ENCODE measurements at regions of chrX and their contacts with region 1.

Region 1: GRCh38 chrX:154748712-154749343 is 2.0 kb downstream of the GAB3 start:
- DNase-seq: peak; percentile 55
- ATAC-seq: peak; percentile 83
- H3K4me3 Mint-ChIP-seq: no peak overlapping the region
- H3K27ac Mint-ChIP-seq: no peak overlapping the region
- H3K4me1 Mint-ChIP-seq: peaks cover 22% of the 10 kb centered on the region
- H3K27me3 Mint-ChIP-seq: peaks cover 2% of the 10 kb centered on the region

Region 2: GRCh38 chrX:154714925-154715324 is 33.9 kb before region 1 on chrX:
- CTCF ChIA-PET with region 1: interaction called, 58 read pairs
- POLR2A ChIA-PET with region 1: interaction called, 7 read pairs
- intact Hi-C with region 1: loop called (anchors 1 to 2 kb)
- DNase-seq: peak; percentile 52
- ATAC-seq: no peak
- H3K4me3 Mint-ChIP-seq: no peak overlapping the region
- H3K27ac Mint-ChIP-seq: no peak overlapping the region
- H3K4me1 Mint-ChIP-seq: peaks cover 49% of the 10 kb centered on the region
- H3K27me3 Mint-ChIP-seq: no peaks in the 10 kb centered on the region

Region 3: GRCh38 chrX:154734061-154734781 is 14.6 kb before region 1 on chrX:
- CTCF ChIA-PET with region 1: interaction called, 22 read pairs
- POLR2A ChIA-PET with region 1: interaction called, 4 read pairs
- intact Hi-C with region 1: no loop called
- DNase-seq: peak; percentile 16
- ATAC-seq: peak; percentile 63
- H3K4me3 Mint-ChIP-seq: peak overlapping the region; percentile 56
- H3K27ac Mint-ChIP-seq: peak overlapping the region; percentile 90
- H3K4me1 Mint-ChIP-seq: peaks cover 83% of the 10 kb centered on the region
- H3K27me3 Mint-ChIP-seq: no peaks in the 10 kb centered on the region

Region 4: GRCh38 chrX:154840856-154841255 is 92.0 kb after region 1 on chrX:
- CTCF ChIA-PET with region 1: interaction called, 21 read pairs
- POLR2A ChIA-PET with region 1: no interaction called
- intact Hi-C with region 1: loop called (anchors 1 to 5 kb)
- DNase-seq: peak; percentile 6
- ATAC-seq: peak; percentile 44
- H3K4me3 Mint-ChIP-seq: no peak overlapping the region
- H3K27ac Mint-ChIP-seq: no peak overlapping the region
- H3K4me1 Mint-ChIP-seq: peaks cover under 1% of the 10 kb centered on the region
- H3K27me3 Mint-ChIP-seq: no peaks in the 10 kb centered on the region

Region 5: DNA sequence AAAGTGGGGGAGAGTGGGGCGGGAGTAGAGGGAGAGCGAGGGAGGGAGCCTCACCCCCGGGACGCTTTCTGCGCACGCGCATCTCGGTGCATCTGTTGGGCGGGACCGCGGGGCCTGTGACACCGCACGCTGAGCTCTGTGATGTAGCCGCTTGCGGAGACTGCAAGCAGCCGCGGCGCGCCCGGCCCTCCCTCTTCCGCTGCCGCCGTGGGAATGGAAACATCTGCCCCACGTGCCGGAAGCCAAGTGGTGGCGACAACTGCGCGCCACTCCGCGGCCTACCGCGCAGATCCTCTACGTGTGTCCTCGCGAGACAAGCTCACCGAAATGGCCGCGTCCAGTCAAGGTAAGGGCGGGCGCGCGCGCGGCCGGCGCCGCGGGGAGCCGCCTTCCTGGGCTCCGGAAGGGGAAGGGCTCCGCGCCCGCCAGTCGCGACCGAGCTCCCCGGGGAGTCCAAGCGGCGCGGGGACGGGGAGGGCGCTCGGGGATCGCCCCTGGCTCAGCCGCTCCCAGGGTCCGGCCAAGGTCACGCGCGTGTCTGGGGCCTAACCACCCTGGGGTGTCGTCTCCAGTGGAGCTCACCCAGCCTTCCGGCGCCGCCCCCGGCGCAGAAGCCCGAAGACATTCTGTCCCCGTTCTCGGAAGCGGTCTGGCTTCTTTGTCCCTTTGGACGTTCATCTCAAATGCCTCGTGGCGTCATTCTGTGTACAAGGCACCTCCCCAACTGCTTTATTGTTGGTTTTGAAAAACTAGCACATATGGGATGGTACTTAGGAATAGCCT is 278.1 kb after region 1 on chrX and contains the start of gene FUNDC2:
- CTCF ChIA-PET with region 1: no interaction called
- POLR2A ChIA-PET with region 1: no interaction called
- intact Hi-C with region 1: no loop called
- DNase-seq: peak; percentile 94
- ATAC-seq: peak; percentile 86
- H3K4me3 Mint-ChIP-seq: peak within 1 kb of the TSS; percentile 86
- H3K27ac Mint-ChIP-seq: peak within 1 kb of the TSS; percentile 93
- H3K4me1 Mint-ChIP-seq: peaks cover 21% of the 10 kb centered on the region
- H3K27me3 Mint-ChIP-seq: no peaks in the 10 kb centered on the region
- total RNA-seq, gene FUNDC2: 83.7 to 86.9 TPM

Measured in activated CD4-positive, alpha-beta T cell treated with anti-CD3 and anti-CD28 coated beads for 36 hours (primary cell).